ENCODE measurements at regions of chr3 and their contacts with region 1.

Region 1: GRCh38 chr3:125644036-125645010 is 49.0 kb upstream of the OSBPL11 start:
- DNase-seq: no peak
- H3K4me3 ChIP-seq: no peak overlapping the region
- H3K27ac ChIP-seq: no peak overlapping the region
- H3K4me1 ChIP-seq: peaks cover 16% of the 10 kb centered on the region
- H3K27me3 ChIP-seq: no peaks in the 10 kb centered on the region
- CTCF ChIP-seq: no peak

Region 2: GRCh38 chr3:125024817-125025216 is 619.5 kb before region 1 on chr3:
- CTCF ChIA-PET with region 1: no interaction called
- dilution Hi-C with region 1: no loop called
- in situ Hi-C with region 1: no loop called
- intact Hi-C with region 1: no loop called
- DNase-seq: no peak
- H3K4me3 ChIP-seq: no peak overlapping the region
- H3K27ac ChIP-seq: no peak overlapping the region
- H3K4me1 ChIP-seq: no peaks in the 10 kb centered on the region
- H3K27me3 ChIP-seq: no peaks in the 10 kb centered on the region
- CTCF ChIP-seq: no peak

Region 3: GRCh38 chr3:125591116-125591760 is 53.1 kb before region 1 on chr3:
- CTCF ChIA-PET with region 1: no interaction called
- dilution Hi-C with region 1: no loop called
- in situ Hi-C with region 1: no loop called
- intact Hi-C with region 1: no loop called
- DNase-seq: no peak
- H3K4me3 ChIP-seq: no peak overlapping the region
- H3K27ac ChIP-seq: no peak overlapping the region
- H3K4me1 ChIP-seq: peaks cover 18% of the 10 kb centered on the region
- H3K27me3 ChIP-seq: no peaks in the 10 kb centered on the region
- CTCF ChIP-seq: no peak

Region 4: DNA sequence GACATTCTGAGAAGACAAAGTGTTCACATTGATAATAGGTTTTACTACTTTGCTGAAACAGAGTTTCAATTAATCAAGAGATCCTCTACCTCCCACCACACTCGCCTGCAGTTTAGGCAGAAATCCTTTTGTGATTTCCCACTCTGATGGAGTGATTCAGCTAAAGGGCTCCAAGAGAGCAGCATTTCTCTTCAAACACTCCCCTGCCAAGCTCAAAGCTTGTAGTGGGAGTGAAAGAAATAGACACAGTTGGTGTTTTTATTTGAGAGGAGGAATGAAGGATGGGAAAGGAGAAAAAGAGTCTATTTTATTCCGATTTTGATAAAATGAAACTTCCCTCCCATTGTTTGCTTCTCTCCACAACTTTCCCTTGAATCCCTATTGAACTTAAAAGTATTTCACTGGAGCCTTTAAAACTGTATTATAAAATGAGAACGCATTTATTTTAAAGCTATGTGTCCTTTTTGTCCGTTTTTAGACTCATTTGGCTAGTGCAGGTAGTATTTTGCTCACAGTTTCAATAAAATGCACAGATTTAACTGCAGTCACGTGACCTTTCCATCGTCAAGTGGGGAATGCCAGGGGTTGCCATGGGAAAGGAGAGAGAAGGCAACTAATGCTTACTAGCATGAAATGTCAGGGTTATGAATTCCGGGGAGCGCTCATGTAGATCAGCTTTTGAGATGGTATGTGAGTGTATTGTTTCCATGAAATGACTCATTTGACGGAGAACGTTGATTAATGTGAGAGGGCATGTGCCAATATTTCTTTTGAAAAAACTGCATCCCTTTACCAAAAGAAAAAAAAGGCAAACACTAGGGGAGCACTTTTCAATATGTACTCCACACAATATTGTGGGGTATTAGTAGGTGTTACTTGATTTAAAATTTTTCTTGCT is 41.3 kb before region 1 on chr3:
- CTCF ChIA-PET with region 1: no interaction called
- dilution Hi-C with region 1: no loop called
- in situ Hi-C with region 1: no loop called
- intact Hi-C with region 1: loop called (anchors 5 kb)
- DNase-seq: peak; percentile 86
- H3K4me3 ChIP-seq: no peak overlapping the region
- H3K27ac ChIP-seq: peak overlapping the region; percentile 30
- H3K4me1 ChIP-seq: peaks cover 7% of the 10 kb centered on the region
- H3K27me3 ChIP-seq: no peaks in the 10 kb centered on the region
- CTCF ChIP-seq: peak; percentile 10 to 26

Region 5: DNA sequence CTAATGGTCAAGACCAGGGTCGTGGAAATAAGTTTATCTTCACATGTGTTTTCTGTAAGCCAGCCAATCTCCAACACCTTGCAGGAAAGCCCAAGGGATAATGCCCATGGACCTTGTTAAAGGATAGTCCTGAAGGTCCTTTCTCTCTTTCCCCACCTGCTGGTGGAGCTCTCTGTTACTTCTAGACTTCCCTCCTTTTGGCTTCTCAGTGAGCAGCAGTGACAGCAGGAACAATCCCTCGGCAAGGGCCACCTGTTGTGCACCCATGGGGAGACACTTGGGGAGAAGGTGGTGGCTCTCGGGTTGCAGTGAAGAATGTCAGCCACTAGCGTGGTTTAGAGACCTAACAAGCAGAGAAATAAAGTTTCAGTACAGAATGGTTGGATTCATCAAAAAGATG is 34.9 kb after region 1 on chr3:
- CTCF ChIA-PET with region 1: interaction called, 11 read pairs
- dilution Hi-C with region 1: no loop called
- in situ Hi-C with region 1: no loop called
- intact Hi-C with region 1: no loop called
- DNase-seq: peak; percentile 4
- H3K4me3 ChIP-seq: no peak overlapping the region
- H3K27ac ChIP-seq: no peak overlapping the region
- H3K4me1 ChIP-seq: no peaks in the 10 kb centered on the region
- H3K27me3 ChIP-seq: no peaks in the 10 kb centered on the region
- CTCF ChIP-seq: peak in 1 of 2 donors; percentile 18

Measured in mammary epithelial cell (primary cell).